GM12878 (cell line): ENCODE measurements at regions of chrX and their contacts with region 1.

Region 1: GRCh38 chrX:11770320-11770719 is 12.3 kb downstream of the MSL3 start:
- DNase-seq: peak; percentile 68
- ATAC-seq: peak; percentile 68
- H3K4me3 ChIP-seq: no peak overlapping the region
- H3K27ac ChIP-seq: peak overlapping the region; percentile 5
- H3K4me1 ChIP-seq: peaks cover 23% of the 10 kb centered on the region
- H3K27me3 ChIP-seq: no peaks in the 10 kb centered on the region
- CTCF ChIP-seq: peak; percentile 86 to 90 (median 90)
- EP300 ChIP-seq: no peak
- POLR2A ChIP-seq: no peak
- RAD21 ChIP-seq: peak; percentile 97

Region 2: GRCh38 chrX:11533211-11533651 is 237.1 kb before region 1 on chrX:
- CTCF ChIA-PET with region 1: interaction called, 61 read pairs
- POLR2A ChIA-PET with region 1: no interaction called
- RAD21 ChIA-PET with region 1: interaction called, 18 read pairs
- SMC1A ChIA-PET with region 1: interaction called, 105 read pairs
- in situ Hi-C with region 1: loop called (anchors 5 kb)
- intact Hi-C with region 1: loop called (anchors 1 kb)
- DNase-seq: peak; percentile 61
- ATAC-seq: peak; percentile 93
- H3K4me3 ChIP-seq: no peak overlapping the region
- H3K27ac ChIP-seq: no peak overlapping the region
- H3K4me1 ChIP-seq: no peaks in the 10 kb centered on the region
- H3K27me3 ChIP-seq: no peaks in the 10 kb centered on the region
- CTCF ChIP-seq: peak; percentile 41 to 98 (median 83); a peak in 4 of 6 replicates
- EP300 ChIP-seq: no peak
- POLR2A ChIP-seq: no peak
- RAD21 ChIP-seq: peak; percentile 72

Region 3: DNA sequence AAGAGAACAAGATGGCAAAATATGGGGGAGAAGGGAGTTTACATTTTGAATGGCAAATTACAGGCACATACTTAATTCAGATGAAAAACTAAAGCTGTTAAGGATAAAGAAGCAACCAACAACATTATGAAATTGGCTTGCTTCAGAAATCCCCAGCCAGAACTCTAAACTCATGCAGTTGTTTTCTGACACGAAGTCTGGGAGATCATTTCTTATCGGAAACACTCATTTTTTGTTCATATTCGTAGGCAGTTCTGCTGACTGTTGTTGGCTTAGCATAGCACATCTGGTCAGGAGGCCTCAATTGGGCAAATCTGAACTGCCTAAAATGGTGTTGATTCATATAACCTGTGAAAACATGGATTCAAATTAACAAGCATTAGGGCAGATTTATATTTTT is 71.6 kb before region 1 on chrX:
- CTCF ChIA-PET with region 1: no interaction called
- POLR2A ChIA-PET with region 1: no interaction called
- RAD21 ChIA-PET with region 1: no interaction called
- SMC1A ChIA-PET with region 1: no interaction called
- in situ Hi-C with region 1: no loop called
- intact Hi-C with region 1: no loop called
- DNase-seq: no peak
- ATAC-seq: no peak
- H3K4me3 ChIP-seq: no peak overlapping the region
- H3K27ac ChIP-seq: no peak overlapping the region
- H3K4me1 ChIP-seq: no peaks in the 10 kb centered on the region
- H3K27me3 ChIP-seq: no peaks in the 10 kb centered on the region
- CTCF ChIP-seq: no peak
- EP300 ChIP-seq: no peak
- POLR2A ChIP-seq: no peak
- RAD21 ChIP-seq: no peak

Region 4: DNA sequence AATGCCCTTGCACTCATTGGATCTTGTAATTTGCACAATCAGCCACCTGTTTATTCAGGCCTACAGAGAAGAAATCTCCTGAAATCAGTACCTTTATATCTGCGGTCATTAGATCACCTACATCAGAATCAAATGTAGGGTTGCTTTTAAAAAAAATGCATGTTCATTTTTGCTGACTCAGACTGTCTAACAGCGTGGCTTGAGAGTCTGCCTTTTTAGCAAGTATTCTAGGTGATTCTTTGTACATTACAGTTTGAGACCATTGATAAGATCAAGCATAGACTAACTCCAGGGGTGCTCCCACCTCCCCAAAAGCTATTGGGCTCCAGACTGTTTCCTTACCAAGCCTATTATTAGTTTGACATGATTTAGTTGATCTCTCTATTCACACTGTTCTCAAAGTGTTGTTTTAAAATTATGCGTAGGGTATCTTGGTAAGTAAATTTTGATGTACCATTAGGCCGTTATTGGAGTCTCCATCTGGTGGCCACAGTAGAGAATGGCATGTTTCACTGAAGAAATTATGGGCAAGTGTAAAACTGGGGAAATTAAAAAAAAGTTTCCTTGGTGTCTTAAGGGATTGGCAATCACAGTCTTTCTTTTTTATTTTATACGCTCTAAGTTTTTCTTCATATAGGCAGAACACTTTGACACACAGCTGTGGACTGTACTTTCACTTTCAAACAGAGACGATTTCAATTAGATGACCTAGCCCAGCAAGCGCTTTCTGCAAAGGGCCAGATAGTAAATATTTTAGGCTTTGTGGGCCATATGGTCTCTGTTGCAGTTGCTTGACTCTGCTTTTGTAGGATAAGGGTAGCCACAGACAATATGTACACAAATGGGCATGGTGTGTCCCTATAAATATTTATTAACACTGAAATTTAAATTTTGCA is 46.0 kb before region 1 on chrX:
- CTCF ChIA-PET with region 1: interaction called, 8 read pairs
- POLR2A ChIA-PET with region 1: interaction called, 3 read pairs
- RAD21 ChIA-PET with region 1: interaction called, 4 read pairs
- SMC1A ChIA-PET with region 1: interaction called, 6 read pairs
- in situ Hi-C with region 1: no loop called
- intact Hi-C with region 1: loop called (anchors 1 kb)
- DNase-seq: no peak
- ATAC-seq: peak; percentile 85
- H3K4me3 ChIP-seq: no peak overlapping the region
- H3K27ac ChIP-seq: no peak overlapping the region
- H3K4me1 ChIP-seq: no peaks in the 10 kb centered on the region
- H3K27me3 ChIP-seq: no peaks in the 10 kb centered on the region
- CTCF ChIP-seq: peak; percentile 63 to 68 (median 64)
- EP300 ChIP-seq: no peak
- POLR2A ChIP-seq: no peak
- RAD21 ChIP-seq: peak; percentile 64

Region 5: DNA sequence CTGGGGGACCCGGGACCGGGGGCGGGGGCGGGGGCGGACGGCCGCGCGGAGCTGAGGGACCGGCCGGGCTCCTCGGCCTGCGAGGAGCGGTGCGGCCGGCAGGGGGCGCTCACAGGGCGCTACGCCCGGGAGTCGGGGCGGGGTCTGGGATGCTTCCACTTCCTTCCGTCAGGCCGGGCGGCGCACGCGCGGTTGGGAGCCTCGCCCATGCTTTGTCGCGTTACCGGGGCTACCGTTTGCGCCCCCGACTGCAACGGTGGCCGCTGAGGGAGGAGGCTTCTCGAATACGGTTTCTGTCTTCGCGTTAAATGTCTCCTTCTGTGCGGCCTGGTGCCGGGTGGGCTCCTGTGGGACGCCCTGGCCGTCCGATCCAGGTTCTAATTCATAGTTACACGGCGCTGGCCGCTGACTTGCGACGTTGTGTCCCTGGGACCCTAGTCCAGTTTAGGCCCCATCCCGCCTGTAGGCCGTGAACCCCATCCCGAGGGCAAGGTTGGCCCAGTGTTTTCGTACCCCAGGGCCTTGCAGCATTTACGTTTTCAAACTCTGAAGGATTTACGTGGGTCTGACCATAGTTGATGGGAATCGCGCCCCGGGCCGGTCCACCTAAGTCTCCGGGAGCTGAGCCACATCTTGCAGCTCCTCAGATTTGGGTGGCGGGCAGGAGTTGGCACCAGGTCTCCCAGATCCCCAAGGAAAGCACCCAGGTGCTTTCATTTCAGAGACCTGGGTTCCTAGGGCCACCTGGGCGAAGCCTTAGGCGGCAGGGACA is 11.7 kb before region 1 on chrX:
- CTCF ChIA-PET with region 1: interaction called, 40 read pairs
- POLR2A ChIA-PET with region 1: interaction called, 15 read pairs
- RAD21 ChIA-PET with region 1: interaction called, 89 read pairs
- SMC1A ChIA-PET with region 1: interaction called, 57 read pairs
- in situ Hi-C with region 1: no loop called
- intact Hi-C with region 1: loop called (anchors 1 kb)
- DNase-seq: no peak
- ATAC-seq: peak; percentile 44
- H3K4me3 ChIP-seq: peak overlapping the region; percentile 60
- H3K27ac ChIP-seq: peak overlapping the region; percentile 90
- H3K4me1 ChIP-seq: peaks cover 7% of the 10 kb centered on the region; the same call in 1 of the 2 replicates
- H3K27me3 ChIP-seq: no peaks in the 10 kb centered on the region
- CTCF ChIP-seq: peak; percentile 34 to 68 (median 59); a peak in 4 of 6 replicates
- EP300 ChIP-seq: peak in 1 of 2 experiments; percentile 10; a peak in 1 of 4 replicates
- POLR2A ChIP-seq: no peak; the same call in 1 of the 2 replicates
- RAD21 ChIP-seq: peak; percentile 43

Region 6: DNA sequence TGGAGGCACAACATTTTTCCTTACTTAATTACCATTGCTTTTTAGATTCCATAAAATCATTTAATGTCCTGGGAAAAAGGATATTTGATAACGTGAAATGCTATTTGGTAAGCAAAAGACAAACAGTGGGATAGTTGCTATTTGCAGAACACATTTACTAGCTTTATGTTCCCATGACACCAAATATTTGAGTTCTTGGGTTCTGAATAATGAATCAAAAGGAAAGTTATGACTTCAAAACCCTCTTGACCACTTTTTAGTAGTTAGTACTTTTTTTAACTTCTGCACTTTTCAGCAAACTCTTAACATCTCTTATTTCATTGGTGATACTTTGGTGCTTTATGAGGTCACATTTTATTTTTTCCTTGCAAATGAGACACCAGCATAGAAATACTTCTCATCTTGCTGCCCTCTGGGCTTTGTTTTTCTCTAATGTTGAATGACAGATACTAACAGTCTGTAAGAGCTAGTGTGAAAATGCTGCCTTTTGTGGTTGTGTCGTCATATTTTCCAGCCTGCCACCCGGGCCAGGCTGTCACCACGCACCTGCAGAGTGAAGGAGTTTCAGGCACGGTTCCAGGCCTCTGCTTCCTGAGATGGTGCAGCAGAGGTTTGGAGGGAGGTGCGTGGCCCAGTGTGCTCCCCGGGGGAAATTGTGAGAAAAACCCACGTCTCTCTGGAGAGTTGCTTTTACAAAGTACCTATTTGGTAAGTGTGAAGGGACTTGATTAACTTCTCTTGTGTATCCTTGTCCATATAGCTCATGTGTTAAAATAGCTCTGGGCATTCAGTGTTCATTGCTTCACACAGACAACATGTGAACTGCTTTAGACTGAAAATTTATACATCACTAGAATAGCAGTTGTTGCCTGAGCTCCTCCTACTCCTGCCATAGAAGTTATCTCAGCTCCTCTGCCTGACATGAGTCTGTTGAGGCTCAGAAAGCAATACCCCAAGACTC is 22.4 kb after region 1 on chrX:
- CTCF ChIA-PET with region 1: interaction called, 226 read pairs
- POLR2A ChIA-PET with region 1: interaction called, 207 read pairs
- RAD21 ChIA-PET with region 1: interaction called, 428 read pairs
- SMC1A ChIA-PET with region 1: interaction called, 404 read pairs
- in situ Hi-C with region 1: no loop called
- intact Hi-C with region 1: loop called (anchors 2 kb)
- DNase-seq: peak; percentile 86
- ATAC-seq: peak; percentile 87
- H3K4me3 ChIP-seq: peak overlapping the region; percentile 37; the same call in 1 of the 2 replicates
- H3K27ac ChIP-seq: peak overlapping the region; percentile 61
- H3K4me1 ChIP-seq: peaks cover 31% of the 10 kb centered on the region
- H3K27me3 ChIP-seq: no peaks in the 10 kb centered on the region
- CTCF ChIP-seq: no peak
- EP300 ChIP-seq: peak; percentile 86 to 96
- POLR2A ChIP-seq: 0 out of 2 replicates have a peak, but pooled peaks have one; percentile 27
- RAD21 ChIP-seq: 0 out of 2 replicates have a peak, but pooled peaks have one; percentile 4